Activated CD8-positive, alpha-beta T cell treated with anti-CD3 and anti-CD28 coated beads for 36 hours (primary cell): ENCODE measurements at regions of chr2 and their contacts with region 1.

Region 1: GRCh38 chr2:99337113-99338028 is at the start of gene EIF5B:
- DNase-seq: peak; percentile 94
- ATAC-seq: peak; percentile 72
- H3K4me3 Mint-ChIP-seq: no peak within 1 kb of the TSS
- H3K27ac Mint-ChIP-seq: no peak within 1 kb of the TSS
- H3K4me1 Mint-ChIP-seq: peaks cover 39% of the 10 kb centered on the region
- H3K27me3 Mint-ChIP-seq: no peaks in the 10 kb centered on the region
- CTCF ChIP-seq: peak; percentile 42
- total RNA-seq, gene EIF5B: 71.6 to 75.3 TPM

Region 2: DNA sequence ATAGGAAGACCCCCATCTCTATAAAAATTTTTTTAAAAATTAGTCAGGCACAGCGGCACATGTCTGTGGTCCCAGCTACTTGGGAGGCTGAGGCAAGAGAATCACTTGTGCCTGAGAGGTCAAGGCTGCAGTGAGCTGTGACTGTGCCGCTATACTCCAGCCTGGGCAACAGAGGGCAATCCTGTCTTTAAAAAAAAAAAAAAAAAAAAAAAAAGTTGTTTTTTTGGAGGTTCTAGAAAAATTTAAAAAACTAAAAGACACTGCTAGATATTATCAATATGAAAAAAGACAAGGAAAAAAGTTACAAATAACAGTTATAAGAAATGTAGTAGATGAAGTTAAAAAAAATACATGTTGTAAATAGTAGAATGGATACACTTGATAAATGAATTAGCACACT is 251.9 kb before region 1 on chr2:
- CTCF ChIA-PET with region 1: no interaction called
- POLR2A ChIA-PET with region 1: no interaction called
- intact Hi-C with region 1: no loop called
- DNase-seq: peak; percentile 11
- ATAC-seq: no peak
- H3K4me3 Mint-ChIP-seq: no peak overlapping the region
- H3K27ac Mint-ChIP-seq: no peak overlapping the region
- H3K4me1 Mint-ChIP-seq: peaks cover 4% of the 10 kb centered on the region
- H3K27me3 Mint-ChIP-seq: peaks cover 9% of the 10 kb centered on the region
- CTCF ChIP-seq: peak; percentile 52

Region 3: DNA sequence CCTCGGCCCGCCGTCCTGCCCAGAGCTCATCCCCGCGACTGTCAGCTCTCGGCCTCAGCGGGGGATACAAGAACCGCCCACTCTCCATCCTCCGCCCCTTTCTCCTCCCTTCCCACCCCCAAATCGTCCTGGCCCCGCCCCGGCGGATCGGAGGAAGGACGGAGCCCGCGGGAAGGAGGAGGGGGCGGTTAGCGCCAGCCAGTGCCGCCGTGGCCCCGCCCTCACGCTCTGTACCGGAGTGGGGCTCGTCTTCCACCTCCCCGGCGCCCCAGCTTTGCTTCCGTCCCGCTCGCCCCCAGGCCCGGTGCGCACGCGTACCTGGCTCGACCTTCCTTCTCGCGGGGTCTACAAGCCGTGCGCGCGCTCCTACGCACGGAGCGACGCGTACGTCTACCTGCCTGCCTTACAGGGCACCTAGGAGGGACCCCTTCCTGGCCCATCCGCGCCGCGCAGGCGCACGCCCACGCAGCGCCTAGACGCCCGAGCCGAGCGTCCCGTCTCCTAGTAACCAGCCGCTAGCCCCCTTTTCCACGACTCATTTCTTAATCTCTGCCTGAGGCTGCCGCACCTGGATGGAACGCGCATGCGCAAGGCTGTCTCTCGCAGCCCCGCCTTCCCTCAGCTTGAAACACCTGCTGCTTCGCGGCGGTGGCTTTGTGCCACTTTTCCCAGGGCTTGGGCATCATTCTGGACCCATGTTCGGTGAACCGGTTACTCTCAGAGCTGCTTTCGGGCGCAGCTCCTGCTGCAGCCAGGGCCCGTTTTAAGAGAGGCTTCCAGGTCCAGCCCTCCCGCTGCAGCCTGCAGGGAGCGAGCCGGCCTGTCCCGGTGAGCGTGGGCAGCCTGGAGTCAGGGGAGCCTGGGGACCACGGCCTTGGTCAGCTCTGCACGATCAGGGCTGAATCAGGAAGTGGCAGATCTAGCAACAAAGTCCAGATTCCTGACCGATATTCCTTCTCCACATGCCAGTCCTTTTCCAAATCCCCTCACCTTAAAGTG is 196.0 kb before region 1 on chr2 and contains the start of gene C2orf15:
- CTCF ChIA-PET with region 1: no interaction called
- POLR2A ChIA-PET with region 1: interaction called, 12 read pairs
- intact Hi-C with region 1: no loop called
- DNase-seq: peak; percentile 98
- ATAC-seq: peak; percentile 93
- H3K4me3 Mint-ChIP-seq: peak within 1 kb of the TSS; percentile 94
- H3K27ac Mint-ChIP-seq: peak within 1 kb of the TSS; percentile 86
- H3K4me1 Mint-ChIP-seq: peaks cover 16% of the 10 kb centered on the region
- H3K27me3 Mint-ChIP-seq: no peaks in the 10 kb centered on the region
- CTCF ChIP-seq: no peak
- total RNA-seq, gene C2orf15: 1.4 to 1.5 TPM

Region 4: GRCh38 chr2:99154643-99155536 is 182.5 kb before region 1 on chr2 and contains the starts of genes LIPT1 and TSGA10:
- CTCF ChIA-PET with region 1: interaction called, 7 read pairs
- POLR2A ChIA-PET with region 1: no interaction called
- intact Hi-C with region 1: loop called (anchors 10 kb)
- DNase-seq: peak; percentile 96
- ATAC-seq: peak; percentile 97
- H3K4me3 Mint-ChIP-seq: no peak within 1 kb of the TSS
- H3K27ac Mint-ChIP-seq: peak within 1 kb of the TSS; percentile 86
- H3K4me1 Mint-ChIP-seq: peaks cover 42% of the 10 kb centered on the region
- H3K27me3 Mint-ChIP-seq: no peaks in the 10 kb centered on the region
- CTCF ChIP-seq: no peak
- total RNA-seq, gene LIPT1: 3.3 to 6.0 TPM
- total RNA-seq, gene TSGA10: 8.6 to 9.2 TPM

Region 5: GRCh38 chr2:99348173-99348572 is 10.8 kb after region 1 on chr2:
- CTCF ChIA-PET with region 1: interaction called, 4 read pairs
- POLR2A ChIA-PET with region 1: interaction called, 14 read pairs
- intact Hi-C with region 1: no loop called
- DNase-seq: peak; percentile 15
- ATAC-seq: peak; percentile 74
- H3K4me3 Mint-ChIP-seq: no peak overlapping the region
- H3K27ac Mint-ChIP-seq: peak overlapping the region; percentile 67
- H3K4me1 Mint-ChIP-seq: peaks cover 58% of the 10 kb centered on the region
- H3K27me3 Mint-ChIP-seq: no peaks in the 10 kb centered on the region
- CTCF ChIP-seq: no peak

Region 6: DNA sequence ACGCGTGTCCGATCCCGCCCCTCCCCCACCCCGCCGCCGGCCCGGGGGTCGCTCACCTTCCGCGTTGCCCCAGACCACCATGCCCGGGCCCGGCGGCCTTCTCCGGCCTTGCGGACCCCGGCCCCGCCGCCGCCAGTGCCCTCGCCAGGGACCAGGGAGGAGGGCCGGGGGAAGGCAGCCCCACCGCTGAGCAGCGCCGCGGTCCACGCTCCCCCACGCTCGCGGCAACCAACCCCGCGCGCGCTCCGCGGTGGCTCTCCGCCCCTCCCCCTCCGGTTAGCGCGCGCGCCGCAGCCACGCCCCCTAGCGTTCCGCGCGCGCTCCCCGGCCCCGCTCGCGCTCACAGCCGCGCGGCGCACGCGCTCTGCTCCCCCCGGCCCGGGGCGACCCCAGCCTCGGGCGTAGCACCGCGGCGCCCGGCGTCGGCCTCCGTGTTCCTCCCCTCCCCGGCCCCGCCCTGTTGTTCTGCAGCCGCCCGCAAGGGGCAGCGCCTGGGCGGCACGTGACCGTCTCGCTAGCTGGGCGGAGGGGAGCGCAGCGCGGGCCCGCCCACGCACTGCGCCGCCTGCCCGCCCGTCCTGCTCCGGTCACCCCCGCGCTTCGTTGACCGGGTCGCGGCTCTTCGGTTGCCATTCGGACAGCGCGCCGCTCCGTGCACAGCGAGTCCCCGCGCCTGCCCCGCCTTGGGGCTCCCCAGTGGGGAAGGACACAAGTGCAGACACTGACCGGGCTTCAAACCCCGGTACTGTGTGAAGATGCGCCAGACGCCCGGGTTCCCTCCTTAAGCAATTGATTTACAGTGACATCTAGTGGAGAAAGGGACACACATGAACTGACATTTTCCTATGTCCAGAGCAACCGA is 152.6 kb after region 1 on chr2 and contains the start of gene REV1:
- CTCF ChIA-PET with region 1: interaction called, 7 read pairs
- POLR2A ChIA-PET with region 1: no interaction called
- intact Hi-C with region 1: loop called (anchors 2 kb)
- DNase-seq: peak; percentile 93
- ATAC-seq: peak; percentile 93
- H3K4me3 Mint-ChIP-seq: peak within 1 kb of the TSS; percentile 95
- H3K27ac Mint-ChIP-seq: peak within 1 kb of the TSS; percentile 98
- H3K4me1 Mint-ChIP-seq: peaks cover 39% of the 10 kb centered on the region
- H3K27me3 Mint-ChIP-seq: no peaks in the 10 kb centered on the region
- CTCF ChIP-seq: peak; percentile 82
- total RNA-seq, gene REV1: 29.2 to 31.1 TPM

Region 7: GRCh38 chr2:99545066-99545465 is 207.7 kb after region 1 on chr2:
- CTCF ChIA-PET with region 1: no interaction called
- POLR2A ChIA-PET with region 1: no interaction called
- intact Hi-C with region 1: no loop called
- DNase-seq: no peak
- ATAC-seq: no peak
- H3K4me3 Mint-ChIP-seq: no peak overlapping the region
- H3K27ac Mint-ChIP-seq: no peak overlapping the region
- H3K4me1 Mint-ChIP-seq: no peaks in the 10 kb centered on the region
- H3K27me3 Mint-ChIP-seq: peaks cover 6% of the 10 kb centered on the region
- CTCF ChIP-seq: no peak